Body of pancreas (tissue), 4 donors: ENCODE measurements at regions of chr20 and their contacts with region 1.

Region 1: GRCh38 chr20:49541733-49542513 is 26.0 kb downstream of the PTGIS start:
- DNase-seq: peak; percentile 58 to 71 (median 62)
- ATAC-seq: peak; percentile 67
- H3K4me3 ChIP-seq: no peak overlapping the region
- H3K27ac ChIP-seq: no peak overlapping the region
- H3K4me1 ChIP-seq: no peaks in the 10 kb centered on the region
- H3K27me3 ChIP-seq: peaks cover 0 to 1% of the 10 kb centered on the region in 2 donors
- CTCF ChIP-seq: peak; percentile 43 to 90 (median 77)
- POLR2A ChIP-seq: no peak

Region 2: GRCh38 chr20:49028684-49029083 is 513.2 kb before region 1 on chr20:
- intact Hi-C with region 1: no loop called
- DNase-seq: no peak
- ATAC-seq: no peak
- H3K4me3 ChIP-seq: no peak overlapping the region
- H3K27ac ChIP-seq: no peak overlapping the region
- H3K4me1 ChIP-seq: no peaks in the 10 kb centered on the region
- H3K27me3 ChIP-seq: no peaks in the 10 kb centered on the region
- CTCF ChIP-seq: peak in 3 of 7 experiments; percentile 3 to 15 (median 12)
- POLR2A ChIP-seq: no peak

Region 3: GRCh38 chr20:49338061-49338460 is 203.9 kb before region 1 on chr20:
- intact Hi-C with region 1: loop called (anchors 5 kb)
- DNase-seq: no peak
- ATAC-seq: no peak
- H3K4me3 ChIP-seq: no peak overlapping the region
- H3K27ac ChIP-seq: no peak overlapping the region
- H3K4me1 ChIP-seq: no peaks in the 10 kb centered on the region
- H3K27me3 ChIP-seq: no peaks in the 10 kb centered on the region
- CTCF ChIP-seq: no peak
- POLR2A ChIP-seq: no peak

Region 4: DNA sequence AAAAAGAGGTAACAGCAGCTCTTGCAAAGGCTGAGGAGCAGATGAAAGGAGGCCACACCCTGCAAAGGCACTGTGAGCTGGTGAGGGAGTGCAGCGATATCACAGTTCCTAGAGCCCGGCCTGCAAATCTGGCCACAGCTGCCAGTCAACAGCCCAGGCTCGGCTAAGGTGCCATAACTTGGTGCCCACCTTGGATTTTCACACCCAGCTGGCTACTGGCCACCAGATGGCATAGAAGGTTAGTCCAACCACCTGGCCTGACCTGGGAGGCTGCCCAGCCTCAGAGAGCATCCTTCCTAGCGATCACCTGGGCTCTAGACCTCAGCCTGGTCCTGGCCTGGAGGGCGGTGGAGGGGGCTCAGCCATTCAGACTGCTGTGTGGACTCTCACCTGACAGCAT is 106.3 kb before region 1 on chr20:
- intact Hi-C with region 1: no loop called
- DNase-seq: peak in 1 of 4 donors; percentile 15
- ATAC-seq: no peak
- H3K4me3 ChIP-seq: no peak overlapping the region
- H3K27ac ChIP-seq: no peak overlapping the region
- H3K4me1 ChIP-seq: no peaks in the 10 kb centered on the region
- H3K27me3 ChIP-seq: no peaks in the 10 kb centered on the region
- CTCF ChIP-seq: no peak
- POLR2A ChIP-seq: no peak

Region 5: GRCh38 chr20:49888345-49888966 is 346.5 kb after region 1 on chr20:
- intact Hi-C with region 1: loop called (anchors 10 kb)
- DNase-seq: peak; percentile 48 to 69 (median 52)
- ATAC-seq: no peak
- H3K4me3 ChIP-seq: no peak overlapping the region
- H3K27ac ChIP-seq: peak overlapping the region in 2 of 4 donors; percentile 33 to 42
- H3K4me1 ChIP-seq: peaks cover 47% of the 10 kb centered on the region
- H3K27me3 ChIP-seq: no peaks in the 10 kb centered on the region
- CTCF ChIP-seq: peak; percentile 53 to 70 (median 64)
- POLR2A ChIP-seq: no peak